HAP-1 (cell line): ENCODE measurements at regions of chr4 and their contacts with region 1.

Region 1: DNA sequence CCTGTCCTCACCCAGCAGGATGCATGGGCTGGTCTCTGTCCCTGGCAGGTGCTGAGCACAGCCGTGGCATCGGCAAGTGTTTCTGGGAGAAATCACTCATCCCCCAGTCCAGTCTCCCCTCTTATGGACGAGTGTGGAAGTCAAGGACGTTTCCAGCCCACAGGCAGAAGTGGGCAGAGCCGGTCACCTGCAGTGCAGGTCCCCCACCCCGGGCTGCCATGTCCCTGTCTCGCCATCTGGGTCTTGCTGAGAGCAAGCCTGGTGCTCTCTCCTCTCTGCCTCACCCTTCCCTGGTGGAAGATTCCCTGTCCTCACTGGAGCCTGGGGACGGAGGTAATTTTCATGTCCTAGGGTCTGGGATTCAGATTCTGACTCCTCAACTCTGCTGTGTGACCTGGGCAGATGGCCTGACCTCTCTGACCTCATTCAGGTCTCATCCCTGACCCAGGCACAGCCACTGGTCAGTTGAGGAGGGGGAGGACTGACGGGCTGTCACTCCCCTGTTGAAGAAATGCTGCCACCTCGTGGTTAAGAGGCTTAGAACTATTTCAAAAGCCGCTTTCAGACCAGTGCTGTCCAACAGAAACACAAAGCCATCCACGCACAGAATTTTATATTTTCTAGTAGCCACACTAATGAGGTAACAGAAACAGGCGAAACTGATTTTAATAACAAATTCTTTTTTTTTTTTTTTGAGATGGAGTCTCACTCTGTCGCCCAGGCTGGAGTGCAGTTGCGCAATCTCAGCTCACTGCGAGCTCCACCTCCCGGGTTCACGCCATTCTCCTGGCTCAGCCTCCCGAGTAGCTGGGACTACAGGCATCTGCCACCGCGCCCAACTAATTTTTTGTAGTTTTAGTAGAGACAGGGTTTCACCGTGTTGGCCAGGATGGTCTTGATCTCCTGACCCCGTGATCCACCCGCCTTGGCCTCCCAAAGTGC is 1.8 kb downstream of the CPZ start:
- DNase-seq: peak; percentile 41 to 76
- H3K4me3 ChIP-seq: no peak overlapping the region
- H3K4me1 ChIP-seq: no peaks in the 10 kb centered on the region
- H3K27me3 ChIP-seq: peaks cover 53% of the 10 kb centered on the region

Region 2: DNA sequence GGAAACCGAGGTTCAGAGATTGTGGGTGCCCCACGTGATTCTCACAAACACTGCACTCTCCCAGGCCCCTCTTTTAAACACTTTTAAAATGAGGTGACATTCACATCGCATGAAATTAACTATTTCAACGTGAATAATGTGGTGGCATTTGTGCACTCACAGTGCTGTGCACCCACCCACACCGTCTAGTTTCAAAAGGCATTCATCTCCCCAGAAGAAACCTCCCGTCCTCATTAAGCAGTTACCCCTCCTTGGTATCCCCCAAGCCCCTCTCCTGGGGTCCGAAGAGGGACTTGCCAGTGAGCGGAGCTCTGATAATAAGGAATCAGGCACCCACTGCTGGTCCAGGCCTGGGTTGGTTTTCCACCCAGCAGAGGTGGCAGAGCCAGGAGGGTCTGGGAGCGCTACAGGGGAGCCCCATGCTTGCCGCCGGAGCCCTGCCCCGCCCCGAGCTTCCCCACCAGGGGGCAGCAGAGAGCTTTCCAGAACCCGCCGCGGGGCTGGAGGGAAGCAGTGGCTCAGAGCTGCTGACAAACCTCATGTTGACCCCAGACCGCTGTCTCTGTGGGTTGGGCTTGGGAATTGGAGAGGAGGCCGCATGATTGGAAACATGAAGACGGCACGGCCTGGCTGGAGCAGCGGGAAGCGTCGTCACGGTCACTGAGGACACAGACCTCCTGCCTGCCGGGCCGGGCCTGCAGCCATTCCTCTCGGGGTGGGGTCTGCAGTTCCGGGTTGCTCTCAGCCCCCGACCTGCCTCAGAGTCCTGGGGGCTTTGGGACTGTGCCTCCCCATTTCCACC is 352.3 kb before region 1 on chr4:
- in situ Hi-C with region 1: loop called (anchors 25 kb)
- DNase-seq: peak; percentile 76 to 93
- H3K4me3 ChIP-seq: no peak overlapping the region
- H3K4me1 ChIP-seq: peaks cover 2% of the 10 kb centered on the region; the same call in 1 of the 2 replicates
- H3K27me3 ChIP-seq: no peaks in the 10 kb centered on the region

Region 3: GRCh38 chr4:8472689-8473197 is 121.6 kb before region 1 on chr4:
- in situ Hi-C with region 1: loop called (anchors 10 kb)
- DNase-seq: no peak
- H3K4me3 ChIP-seq: no peak overlapping the region
- H3K4me1 ChIP-seq: no peaks in the 10 kb centered on the region
- H3K27me3 ChIP-seq: no peaks in the 10 kb centered on the region

Region 4: GRCh38 chr4:8724823-8725530 is 130.6 kb after region 1 on chr4:
- in situ Hi-C with region 1: no loop called
- DNase-seq: peak in 1 of 2 experiments; percentile 4
- H3K4me3 ChIP-seq: no peak overlapping the region
- H3K4me1 ChIP-seq: no peaks in the 10 kb centered on the region
- H3K27me3 ChIP-seq: peaks cover 7% of the 10 kb centered on the region; the same call in 1 of the 2 replicates